BJ (cell line): ENCODE measurements at regions of chrX and their contacts with region 1.

Region 1: DNA sequence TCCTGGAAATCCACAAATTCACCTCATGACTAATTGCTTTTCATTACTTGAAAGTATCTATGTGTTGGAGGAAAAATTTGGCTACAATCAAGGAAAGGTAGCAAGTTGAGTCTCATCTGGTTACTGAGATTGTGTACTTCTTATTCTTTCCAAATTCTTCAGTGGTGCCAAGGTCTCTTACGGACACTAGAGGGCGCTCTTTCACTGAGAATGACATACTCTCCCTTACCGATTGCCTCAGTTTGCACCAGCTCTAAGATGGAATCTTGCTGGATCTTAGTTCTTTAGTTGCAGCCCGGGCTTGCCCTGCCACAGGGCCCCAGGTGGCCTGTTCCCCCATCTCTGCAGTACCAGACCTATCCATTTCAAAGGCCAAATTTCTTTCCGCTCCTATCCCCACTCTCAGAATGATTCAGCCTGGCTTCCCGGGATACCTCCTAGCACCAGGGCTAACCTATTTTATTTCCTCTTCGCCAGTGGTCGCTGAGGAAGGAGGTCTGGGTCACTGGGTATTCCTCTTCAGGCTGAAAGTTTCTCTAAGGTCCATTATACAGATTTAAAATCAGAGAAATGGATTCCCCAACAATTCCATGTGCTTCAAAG is 24.6 kb upstream of the GPR50 start:
- DNase-seq: no peak
- H3K4me3 ChIP-seq: no peak overlapping the region
- H3K27me3 ChIP-seq: no peaks in the 10 kb centered on the region
- CTCF ChIP-seq: peak; percentile 58

Region 2: DNA sequence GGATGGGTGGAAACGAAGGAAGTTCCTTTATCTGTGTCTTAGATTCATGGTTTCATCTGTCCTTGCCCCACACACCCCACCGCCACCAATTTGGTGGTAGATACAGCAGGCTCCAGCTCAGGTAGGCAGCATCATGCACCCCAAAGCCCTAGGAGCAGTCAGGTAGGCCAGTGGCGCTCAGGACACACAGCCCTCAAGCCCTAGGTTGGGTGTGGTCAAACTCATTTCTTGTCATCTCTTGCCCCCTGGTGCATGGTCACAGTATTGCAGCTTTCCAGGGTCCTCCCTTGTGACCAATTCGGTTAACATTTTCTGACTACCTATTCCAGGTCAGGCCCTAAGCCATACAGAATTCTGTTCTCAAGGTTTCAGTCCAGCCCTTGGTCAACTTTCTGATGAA is 529.0 kb after region 1 on chrX:
- CTCF ChIA-PET with region 1: interaction called, 19 read pairs
- POLR2A ChIA-PET with region 1: no interaction called
- DNase-seq: no peak
- H3K4me3 ChIP-seq: no peak overlapping the region
- H3K27me3 ChIP-seq: no peaks in the 10 kb centered on the region
- CTCF ChIP-seq: peak; percentile 51